HEK293 (cell line): ENCODE measurements at regions of chr4 and their contacts with region 1.

Region 1: GRCh38 chr4:15956179-15956850 is 6.7 kb downstream of the FGFBP2 start:
- H3K4me3 ChIP-seq: no peak overlapping the region
- H3K27ac ChIP-seq: no peak overlapping the region
- H3K4me1 ChIP-seq: no peaks in the 10 kb centered on the region
- CTCF ChIP-seq: peak; percentile 56

Region 2: GRCh38 chr4:15479089-15479912 is 477.0 kb before region 1 on chr4:
- CTCF ChIA-PET with region 1: interaction called, 12 read pairs
- POLR2A ChIA-PET with region 1: no interaction called
- H3K4me3 ChIP-seq: peak overlapping the region; percentile 48
- H3K27ac ChIP-seq: peak overlapping the region; percentile 51; the same call in 1 of the 2 replicates
- H3K4me1 ChIP-seq: no peaks in the 10 kb centered on the region; the same call in 1 of the 2 replicates
- CTCF ChIP-seq: peak; percentile 55; the same call in 1 of the 2 replicates

Region 3: GRCh38 chr4:15805583-15806517 is 150.5 kb before region 1 on chr4:
- CTCF ChIA-PET with region 1: interaction called, 48 read pairs
- POLR2A ChIA-PET with region 1: interaction called, 4 read pairs
- H3K4me3 ChIP-seq: no peak overlapping the region
- H3K27ac ChIP-seq: no peak overlapping the region
- H3K4me1 ChIP-seq: no peaks in the 10 kb centered on the region
- CTCF ChIP-seq: peak; percentile 30; the same call in 1 of the 2 replicates

Region 4: DNA sequence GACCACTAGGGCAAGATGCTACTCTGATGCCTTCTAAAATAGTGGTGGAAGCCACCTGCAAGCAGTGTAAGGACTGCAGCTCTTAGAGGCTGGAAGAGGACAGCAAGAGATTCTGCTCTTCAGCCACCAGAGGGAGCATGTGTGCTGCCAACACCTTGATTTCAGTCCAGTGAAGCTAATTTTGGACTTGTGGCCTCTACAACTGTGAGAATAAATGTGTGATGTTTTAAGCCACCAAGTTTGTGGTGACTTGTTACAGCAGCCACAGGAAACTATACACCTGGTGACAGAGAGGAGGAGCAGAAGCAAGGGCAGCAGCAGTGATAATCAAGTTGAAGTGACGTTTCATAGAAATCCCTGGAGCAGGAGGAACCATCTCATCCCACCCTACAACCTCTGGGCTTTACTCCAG is 73.6 kb before region 1 on chr4:
- CTCF ChIA-PET with region 1: interaction called, 119 read pairs
- POLR2A ChIA-PET with region 1: interaction called, 6 read pairs
- H3K4me3 ChIP-seq: no peak overlapping the region
- H3K27ac ChIP-seq: no peak overlapping the region
- H3K4me1 ChIP-seq: no peaks in the 10 kb centered on the region
- CTCF ChIP-seq: 0 out of 2 replicates have a peak, but pooled peaks have one; percentile 51

Region 5: DNA sequence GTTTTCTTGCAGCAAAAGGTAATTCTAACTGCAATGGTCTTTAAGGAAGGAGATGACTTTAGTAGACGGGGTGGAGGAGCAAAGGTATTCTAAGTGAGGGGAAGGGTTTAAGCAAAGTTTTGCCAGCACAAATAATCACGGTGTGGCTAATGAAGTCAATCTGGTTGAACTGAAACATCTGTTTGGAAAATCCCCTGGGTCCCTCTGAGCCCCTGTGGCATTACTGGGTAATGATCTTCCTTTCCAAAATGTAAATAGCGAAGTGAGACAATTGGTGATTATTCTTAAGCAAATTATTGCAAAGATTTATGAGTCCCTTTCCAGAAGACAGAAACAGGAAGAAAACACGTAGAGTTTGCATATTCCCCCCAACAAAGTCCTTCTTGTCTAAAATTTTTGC is 65.0 kb before region 1 on chr4:
- CTCF ChIA-PET with region 1: interaction called, 13 read pairs
- POLR2A ChIA-PET with region 1: no interaction called
- H3K4me3 ChIP-seq: no peak overlapping the region
- H3K27ac ChIP-seq: no peak overlapping the region
- H3K4me1 ChIP-seq: no peaks in the 10 kb centered on the region
- CTCF ChIP-seq: no peak

Region 6: GRCh38 chr4:15938182-15938581 is 18.1 kb before region 1 on chr4:
- CTCF ChIA-PET with region 1: interaction called, 10 read pairs
- POLR2A ChIA-PET with region 1: no interaction called
- H3K4me3 ChIP-seq: no peak overlapping the region
- H3K27ac ChIP-seq: no peak overlapping the region
- H3K4me1 ChIP-seq: no peaks in the 10 kb centered on the region
- CTCF ChIP-seq: no peak

Region 7: GRCh38 chr4:16264798-16265197 is 308.5 kb after region 1 on chr4:
- CTCF ChIA-PET with region 1: interaction called, 11 read pairs
- POLR2A ChIA-PET with region 1: no interaction called
- H3K4me3 ChIP-seq: no peak overlapping the region
- H3K27ac ChIP-seq: no peak overlapping the region
- H3K4me1 ChIP-seq: no peaks in the 10 kb centered on the region
- CTCF ChIP-seq: no peak